Mucosa of descending colon (tissue), 3 donors: ENCODE measurements at regions of chr6 and their contacts with region 1.

Region 1: DNA sequence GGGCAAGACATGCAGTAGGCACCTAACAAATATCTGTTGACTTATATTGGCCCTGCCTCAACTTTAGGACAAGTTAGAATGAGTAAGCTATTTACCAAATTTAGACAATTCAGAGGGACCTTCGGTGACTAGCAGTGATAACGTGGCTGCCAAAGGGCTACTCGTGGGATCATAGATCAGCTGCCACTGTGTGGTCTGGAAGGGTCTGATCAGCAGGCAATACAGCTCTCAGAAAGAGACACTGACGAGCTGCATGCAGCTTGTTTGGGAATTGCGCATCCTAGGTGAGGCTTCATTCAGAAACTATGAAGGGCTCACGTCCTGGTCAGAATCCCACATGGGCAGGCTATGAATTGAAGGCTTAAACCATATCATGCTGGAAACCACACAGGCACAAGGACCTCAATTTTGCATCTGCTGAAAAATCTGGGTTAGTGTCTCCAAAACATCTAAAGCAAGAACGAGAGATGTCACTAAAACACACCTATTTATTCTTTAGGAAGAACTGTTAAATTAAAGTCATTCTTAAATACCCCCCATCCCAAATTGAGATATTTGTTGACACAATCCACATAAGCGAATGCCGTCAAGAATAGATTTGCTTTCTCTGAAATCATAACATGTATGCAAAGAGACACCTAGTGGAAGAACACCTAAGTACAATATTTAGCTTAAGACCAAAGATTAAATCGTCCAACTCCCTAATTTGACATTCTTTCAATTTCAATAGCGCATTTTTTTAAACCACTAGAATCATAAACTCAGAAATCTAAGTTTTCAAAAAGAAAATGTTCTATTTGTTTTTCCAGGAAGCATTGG is 79.6 kb downstream of the IPCEF1 start:
- DNase-seq: no peak
- ATAC-seq: peak; percentile 59
- H3K4me3 ChIP-seq: no peak overlapping the region
- H3K4me1 ChIP-seq: no peaks in the 10 kb centered on the region
- CTCF ChIP-seq: peak; percentile 22

Region 2: DNA sequence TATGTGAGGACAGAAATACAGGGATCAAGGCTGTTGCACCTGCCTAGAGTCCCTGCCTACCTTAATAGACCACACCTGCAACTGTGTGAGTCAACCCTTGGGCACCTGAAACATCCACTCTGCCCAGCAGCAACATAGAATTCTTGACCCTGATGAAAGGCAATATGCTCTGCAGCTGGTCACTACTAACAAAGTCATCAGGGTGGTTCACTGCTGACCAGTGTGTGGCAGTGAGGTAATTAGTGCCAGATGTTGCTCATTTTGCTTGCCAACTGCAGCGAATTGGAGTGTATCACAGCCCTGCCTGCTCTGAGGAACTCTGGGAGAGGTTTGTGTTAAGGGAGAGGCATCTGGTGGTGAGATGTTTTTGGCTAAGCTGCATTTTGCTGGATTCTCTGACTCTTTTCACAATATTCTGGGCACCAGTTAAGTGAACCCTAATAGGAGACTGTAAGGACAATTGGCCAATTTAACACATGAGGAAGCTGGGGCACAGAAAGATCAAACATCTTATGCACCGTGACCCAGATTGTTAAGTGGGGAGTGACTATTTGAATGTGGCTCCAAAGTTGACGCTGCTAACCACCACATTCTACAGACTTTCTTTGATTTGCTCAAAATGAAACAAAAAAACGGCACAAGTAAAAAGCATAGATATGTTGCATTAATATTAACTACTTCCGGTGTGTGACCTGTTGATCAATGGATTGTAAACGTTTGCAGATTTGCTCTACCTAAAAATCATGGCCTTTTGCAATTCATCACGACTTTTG is 299.9 kb before region 1 on chr6:
- intact Hi-C with region 1: no loop called
- DNase-seq: no peak
- ATAC-seq: no peak
- H3K4me3 ChIP-seq: no peak overlapping the region
- H3K4me1 ChIP-seq: no peaks in the 10 kb centered on the region
- CTCF ChIP-seq: no peak

Region 3: DNA sequence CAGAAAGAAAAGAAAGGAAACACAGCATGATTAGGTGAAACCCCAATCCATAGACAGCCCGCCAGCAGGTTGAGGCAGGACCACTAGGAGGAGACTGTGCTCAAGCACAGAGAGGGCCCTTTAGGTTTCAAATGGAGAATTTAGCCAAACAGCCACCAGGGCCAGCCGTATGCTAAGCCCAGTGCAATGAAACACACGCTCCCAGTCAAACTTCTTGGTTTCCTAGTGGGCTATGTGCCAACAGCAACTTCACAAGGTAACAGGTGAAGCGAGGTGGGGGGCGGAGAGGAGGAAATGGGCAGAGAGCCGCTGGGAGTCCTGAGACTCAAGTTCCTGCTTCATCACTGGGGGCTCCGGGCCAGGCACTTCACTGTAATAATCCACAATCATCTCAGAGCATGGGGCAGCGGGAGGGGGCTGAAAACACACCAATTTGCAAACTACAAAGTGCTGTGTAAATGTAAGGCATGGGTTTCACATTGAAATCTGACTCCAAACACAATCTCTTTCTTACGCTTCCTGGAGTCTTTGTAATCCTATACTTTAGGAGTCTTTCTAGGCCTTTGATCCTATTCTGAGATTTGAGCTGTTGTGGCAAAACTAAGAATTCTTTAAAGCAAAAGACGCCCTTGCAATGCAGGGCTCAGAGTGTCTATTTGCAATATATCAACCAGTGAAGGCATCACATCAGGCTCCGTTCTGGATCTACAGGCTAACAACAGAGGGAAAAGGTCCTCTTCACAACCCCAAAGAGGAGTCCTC is 120.7 kb before region 1 on chr6:
- intact Hi-C with region 1: loop called (anchors 5 kb)
- DNase-seq: peak; percentile 54 to 67 (median 61)
- ATAC-seq: peak; percentile 92
- H3K4me3 ChIP-seq: no peak overlapping the region
- H3K4me1 ChIP-seq: no peaks in the 10 kb centered on the region
- CTCF ChIP-seq: no peak

Region 4: DNA sequence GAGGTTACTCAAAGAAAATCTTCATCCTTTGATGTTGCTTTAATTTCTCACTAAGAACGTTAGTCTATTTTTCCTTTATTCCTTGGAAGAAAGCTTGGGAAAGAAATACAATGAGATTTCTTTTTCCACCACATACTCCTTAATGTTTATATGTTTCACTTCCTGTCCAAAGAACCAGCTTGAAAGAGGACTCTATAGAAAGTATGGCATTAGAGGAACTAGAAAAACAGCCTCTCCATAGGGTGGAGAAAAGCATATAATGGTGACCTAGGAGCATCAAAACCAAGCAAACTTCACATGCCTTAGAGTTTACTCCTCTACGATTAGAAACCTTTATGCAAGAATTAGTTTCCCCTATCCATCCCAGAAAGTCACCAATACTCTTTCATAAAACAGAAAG is 106.9 kb before region 1 on chr6:
- intact Hi-C with region 1: no loop called
- DNase-seq: no peak
- ATAC-seq: no peak
- H3K4me3 ChIP-seq: no peak overlapping the region
- H3K4me1 ChIP-seq: no peaks in the 10 kb centered on the region
- CTCF ChIP-seq: no peak